Left ventricle myocardium inferior (tissue), 1 donor: ENCODE measurements at regions of chr20 and their contacts with region 1.

Region 1: DNA sequence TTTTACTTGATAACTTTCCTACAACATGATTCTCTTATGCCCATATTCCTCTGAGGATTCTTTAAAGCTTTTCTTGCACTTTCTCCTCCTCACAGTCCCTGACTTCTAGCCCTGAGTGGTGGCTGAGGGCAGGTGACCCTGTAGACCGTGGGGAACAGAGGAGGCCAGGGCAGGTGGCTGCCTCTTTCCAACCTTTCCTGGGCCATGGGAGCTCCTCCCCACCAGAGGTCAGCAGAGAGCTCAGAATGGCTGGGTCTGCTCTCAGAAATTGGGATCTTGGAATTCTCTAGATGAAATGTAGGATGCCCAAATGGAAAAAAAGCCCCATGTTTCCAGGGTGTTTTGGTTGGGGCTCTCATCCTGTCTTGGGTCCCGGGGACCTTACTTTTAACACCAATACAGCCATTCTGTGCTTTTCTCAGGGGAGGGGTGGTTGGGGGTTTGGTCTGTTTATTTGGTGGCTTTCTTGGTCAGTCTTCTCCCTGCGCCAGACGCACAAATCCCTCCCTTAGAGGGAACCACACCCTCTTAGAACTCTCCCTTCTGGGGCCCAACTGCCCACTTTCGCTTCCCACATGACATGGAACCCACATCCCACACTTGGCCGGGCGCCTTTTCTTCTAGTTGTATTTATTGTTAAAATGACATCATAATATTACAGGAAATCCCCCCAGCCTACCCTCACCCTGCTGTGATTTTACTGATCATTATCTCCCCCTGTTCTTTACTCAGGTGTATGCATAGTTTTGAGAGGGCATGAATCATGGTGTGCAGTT is 17.9 kb downstream of the GNAS start:
- DNase-seq: peak; percentile 57
- H3K4me3 ChIP-seq: no peak overlapping the region
- H3K27ac ChIP-seq: no peak overlapping the region
- H3K4me1 ChIP-seq: no peaks in the 10 kb centered on the region
- H3K27me3 ChIP-seq: peaks cover 7% of the 10 kb centered on the region
- CTCF ChIP-seq: peak; percentile 93

Region 2: DNA sequence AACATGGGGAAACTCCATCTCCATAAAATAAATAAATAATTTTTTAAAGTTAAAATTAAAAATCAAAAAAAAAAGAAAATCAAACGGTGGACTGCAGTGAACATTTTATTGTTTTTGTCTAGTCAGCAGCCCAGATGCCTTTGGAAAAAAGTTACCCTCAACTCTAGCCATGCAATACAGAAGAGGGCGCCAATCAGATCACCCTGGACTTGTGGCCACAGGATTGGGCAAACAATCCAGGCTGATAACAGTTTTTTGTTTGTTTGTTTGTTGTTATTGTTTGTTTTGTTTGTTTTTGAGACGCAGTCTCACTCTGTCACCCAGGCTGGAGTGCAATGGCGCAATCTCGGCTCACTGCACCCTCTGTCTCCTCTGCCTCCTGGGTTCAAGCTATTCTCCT is 80.2 kb after region 1 on chr20:
- intact Hi-C with region 1: no loop called
- DNase-seq: no peak
- H3K4me3 ChIP-seq: no peak overlapping the region
- H3K27ac ChIP-seq: no peak overlapping the region
- H3K4me1 ChIP-seq: no peaks in the 10 kb centered on the region
- H3K27me3 ChIP-seq: no peaks in the 10 kb centered on the region
- CTCF ChIP-seq: no peak

Region 3: GRCh38 chr20:59032023-59032712 is 161.7 kb after region 1 on chr20 and contains the start of gene ATP5F1E:
- intact Hi-C with region 1: loop called (anchors 10 kb)
- DNase-seq: peak; percentile 98
- H3K4me3 ChIP-seq: peak within 1 kb of the TSS; percentile 85
- H3K27ac ChIP-seq: peak within 1 kb of the TSS; percentile 96
- H3K4me1 ChIP-seq: peaks cover 56% of the 10 kb centered on the region
- H3K27me3 ChIP-seq: no peaks in the 10 kb centered on the region
- CTCF ChIP-seq: no peak
- total RNA-seq, gene ATP5F1E: 134 TPM

Region 4: DNA sequence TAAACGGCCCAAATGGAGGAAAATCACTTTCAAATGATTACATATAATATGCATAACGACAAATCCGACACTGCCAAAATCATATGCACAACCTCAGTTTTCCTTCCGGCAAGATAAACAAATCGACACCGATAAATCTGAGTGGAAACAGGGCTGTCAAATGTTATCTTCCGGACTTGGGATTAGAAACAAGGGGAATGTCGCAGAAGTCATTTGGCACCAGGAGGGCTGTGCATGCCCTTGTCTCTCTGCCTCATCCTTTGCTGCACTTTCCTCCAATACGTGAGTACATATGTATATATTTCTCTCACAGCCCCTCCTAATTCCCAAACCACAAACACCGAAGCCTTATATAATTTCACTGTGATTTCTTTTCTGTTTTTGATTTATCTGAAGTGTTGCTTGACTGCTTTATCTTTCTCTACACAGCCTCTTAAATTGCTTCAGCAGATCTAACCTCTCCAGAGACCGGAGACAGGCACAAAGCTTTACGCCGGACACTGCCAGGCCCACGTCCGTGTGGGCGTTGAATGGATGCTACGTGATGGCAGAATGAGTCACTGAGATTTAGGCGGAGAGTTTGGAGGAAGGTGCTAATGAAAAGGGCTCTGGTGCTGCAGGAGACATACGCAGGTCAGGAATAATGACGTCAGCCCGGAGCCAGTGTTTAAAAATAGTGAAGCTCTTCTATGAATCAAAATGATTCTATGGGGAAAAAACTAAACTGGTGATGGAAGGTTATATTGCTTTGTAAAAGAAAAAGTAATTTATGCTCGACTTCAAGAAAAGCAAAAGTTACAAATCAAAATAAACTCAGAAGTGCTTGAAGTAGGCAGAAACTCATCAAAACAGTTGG is 193.2 kb after region 1 on chr20:
- intact Hi-C with region 1: no loop called
- DNase-seq: peak; percentile 20
- H3K4me3 ChIP-seq: peak overlapping the region; percentile 28
- H3K27ac ChIP-seq: peak overlapping the region; percentile 55
- H3K4me1 ChIP-seq: peaks cover 17% of the 10 kb centered on the region
- H3K27me3 ChIP-seq: no peaks in the 10 kb centered on the region
- CTCF ChIP-seq: no peak

Region 5: DNA sequence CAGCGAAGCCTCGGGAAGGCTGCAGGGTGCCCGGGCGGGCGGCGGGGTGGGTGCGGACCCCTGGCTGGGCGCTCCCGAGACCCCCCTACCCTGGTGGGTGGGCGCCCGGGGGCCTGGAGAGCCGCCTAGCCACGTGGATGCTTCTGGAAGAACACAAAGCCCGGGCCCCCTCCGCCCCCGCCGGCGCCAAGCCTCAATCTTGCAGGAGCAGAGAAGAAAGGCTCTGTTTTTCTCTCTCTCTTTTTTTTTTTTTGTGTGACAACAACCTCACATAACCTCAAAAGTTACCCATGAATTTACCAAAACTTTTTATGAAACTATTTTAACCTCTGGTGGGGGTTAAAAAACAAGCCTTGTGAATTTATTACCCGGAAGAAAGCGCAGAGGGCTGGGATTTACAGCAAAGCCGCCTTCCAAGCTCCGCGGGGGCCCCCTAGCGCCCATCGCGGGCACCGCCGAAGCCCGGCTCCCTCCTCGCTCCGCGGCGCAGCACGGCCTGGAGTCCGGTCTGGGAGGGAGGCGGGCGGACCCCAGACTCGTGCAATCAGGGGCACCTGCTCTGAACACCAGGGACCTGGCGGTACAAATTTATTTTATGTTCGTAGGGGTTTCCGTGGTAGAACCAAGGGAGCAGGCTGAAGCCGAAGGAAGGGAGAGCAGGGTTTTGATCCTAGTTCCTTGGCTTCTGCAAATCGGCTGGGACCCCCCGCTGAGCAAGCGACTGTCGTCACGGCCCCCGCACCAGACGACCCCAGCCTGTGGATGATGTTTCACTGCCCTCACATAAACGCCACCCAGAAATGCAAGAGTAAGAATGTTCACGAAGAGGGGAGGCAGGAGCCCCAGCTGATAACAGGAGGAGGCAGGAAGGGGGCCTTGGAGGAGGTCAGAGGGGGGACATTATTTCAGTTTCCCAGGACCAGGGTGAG is 352.1 kb after region 1 on chr20:
- intact Hi-C with region 1: loop called (anchors 5 kb)
- DNase-seq: peak; percentile 83
- H3K4me3 ChIP-seq: peak overlapping the region; percentile 71
- H3K27ac ChIP-seq: peak overlapping the region; percentile 77
- H3K4me1 ChIP-seq: peaks cover 24% of the 10 kb centered on the region
- H3K27me3 ChIP-seq: peaks cover 55% of the 10 kb centered on the region
- CTCF ChIP-seq: peak; percentile 98

Region 6: DNA sequence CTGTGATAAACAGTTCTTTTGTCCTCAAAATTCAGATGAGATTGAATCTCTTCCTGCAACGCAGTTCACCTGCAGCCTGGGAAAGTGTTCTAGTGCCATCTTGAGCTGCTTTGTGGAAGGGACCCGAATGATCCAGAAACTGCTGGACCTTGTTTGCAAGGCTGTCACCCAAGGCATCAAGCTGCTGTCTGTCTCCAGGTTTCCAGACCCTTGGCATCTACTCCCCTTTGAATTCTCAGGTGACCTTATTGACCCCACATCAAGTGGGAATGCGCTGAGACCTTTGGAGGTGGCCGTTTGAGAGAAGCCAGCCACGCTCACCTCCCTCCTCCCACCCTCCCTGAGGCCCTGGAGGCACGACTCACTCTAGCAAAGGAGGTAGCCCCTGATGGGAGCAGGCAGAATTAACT is 542.5 kb after region 1 on chr20:
- intact Hi-C with region 1: no loop called
- DNase-seq: no peak
- H3K4me3 ChIP-seq: no peak overlapping the region
- H3K27ac ChIP-seq: no peak overlapping the region
- H3K4me1 ChIP-seq: no peaks in the 10 kb centered on the region
- H3K27me3 ChIP-seq: peaks cover 98% of the 10 kb centered on the region
- CTCF ChIP-seq: no peak